CD8-positive, alpha-beta T cell (primary cell): ENCODE measurements at regions of chr12 and their contacts with region 1.

Region 1: GRCh38 chr12:27305673-27306456 is 26.8 kb upstream of the BMAL2 start:
- DNase-seq: peak in 2 of 9 experiments; percentile 46 to 62
- ATAC-seq: peak; percentile 34
- H3K4me3 ChIP-seq: no peak overlapping the region
- H3K4me3 Mint-ChIP-seq: no peak overlapping the region
- H3K27ac ChIP-seq: no peak overlapping the region
- H3K27ac Mint-ChIP-seq: no peak overlapping the region
- H3K4me1 ChIP-seq: no peaks in the 10 kb centered on the region
- H3K4me1 Mint-ChIP-seq: no peaks in the 10 kb centered on the region
- H3K27me3 ChIP-seq: no peaks in the 10 kb centered on the region
- H3K27me3 Mint-ChIP-seq: no peaks in the 10 kb centered on the region
- CTCF ChIP-seq: peak; percentile 89

Region 2: GRCh38 chr12:27024291-27024690 is 281.6 kb before region 1 on chr12:
- CTCF ChIA-PET with region 1: interaction called, 14 read pairs
- POLR2A ChIA-PET with region 1: interaction called, 8 read pairs
- intact Hi-C with region 1: loop called in 1 of 2 experiments (anchors 1 kb)
- DNase-seq: no peak
- ATAC-seq: no peak
- H3K4me3 ChIP-seq: no peak overlapping the region
- H3K4me3 Mint-ChIP-seq: peak overlapping the region; percentile 26
- H3K27ac ChIP-seq: no peak overlapping the region
- H3K27ac Mint-ChIP-seq: no peak overlapping the region
- H3K4me1 ChIP-seq: peaks cover 21% of the 10 kb centered on the region
- H3K4me1 Mint-ChIP-seq: peaks cover 47% of the 10 kb centered on the region
- H3K27me3 ChIP-seq: no peaks in the 10 kb centered on the region
- H3K27me3 Mint-ChIP-seq: no peaks in the 10 kb centered on the region
- CTCF ChIP-seq: no peak